ENCODE measurements at regions of chr4 and their contacts with region 1.

Region 1: DNA sequence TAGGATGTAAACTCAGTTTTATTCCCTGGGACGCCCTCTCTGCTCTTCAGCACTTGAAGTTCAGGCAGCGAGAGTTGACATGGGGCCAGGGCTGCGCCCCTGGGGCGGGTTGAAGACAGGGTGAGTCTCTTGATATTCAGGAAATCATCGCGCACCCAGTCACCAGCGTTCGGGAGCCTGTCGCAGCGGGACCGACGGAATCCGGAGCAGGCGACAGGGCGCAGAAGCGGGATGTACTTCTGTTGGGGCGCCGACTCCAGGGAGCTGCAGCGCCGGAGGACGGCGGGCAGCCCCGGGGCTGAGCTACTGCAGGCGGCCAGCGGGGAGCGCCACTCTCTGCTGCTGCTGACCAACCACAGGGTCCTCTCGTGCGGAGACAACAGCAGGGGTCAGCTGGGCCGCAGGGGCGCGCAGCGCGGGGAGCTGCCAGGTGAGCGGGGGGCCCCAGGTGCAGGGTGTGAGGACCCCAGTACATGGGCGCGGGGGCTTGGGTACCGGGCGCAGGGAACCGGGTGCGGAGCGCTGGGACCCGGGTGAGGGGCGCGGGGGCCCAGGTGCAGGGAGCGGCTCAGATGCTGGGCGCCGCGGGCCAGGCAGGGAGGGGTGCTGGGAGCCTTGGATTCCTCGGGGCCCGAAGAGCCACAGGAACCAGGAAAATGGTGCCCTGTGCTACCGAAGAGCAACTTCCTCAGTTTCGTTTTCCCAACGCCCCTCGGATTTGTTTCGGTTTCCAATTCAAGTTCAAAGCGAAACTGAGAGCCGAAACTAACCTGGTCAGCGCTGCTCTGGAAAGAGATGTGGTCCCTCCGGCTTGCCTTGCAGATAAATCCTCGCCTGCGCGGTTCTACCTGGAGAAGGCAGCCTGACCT is at the start of gene HERC6:
- DNase-seq: peak; percentile 85
- total RNA-seq, gene HERC6: 10.0 TPM

Region 2: DNA sequence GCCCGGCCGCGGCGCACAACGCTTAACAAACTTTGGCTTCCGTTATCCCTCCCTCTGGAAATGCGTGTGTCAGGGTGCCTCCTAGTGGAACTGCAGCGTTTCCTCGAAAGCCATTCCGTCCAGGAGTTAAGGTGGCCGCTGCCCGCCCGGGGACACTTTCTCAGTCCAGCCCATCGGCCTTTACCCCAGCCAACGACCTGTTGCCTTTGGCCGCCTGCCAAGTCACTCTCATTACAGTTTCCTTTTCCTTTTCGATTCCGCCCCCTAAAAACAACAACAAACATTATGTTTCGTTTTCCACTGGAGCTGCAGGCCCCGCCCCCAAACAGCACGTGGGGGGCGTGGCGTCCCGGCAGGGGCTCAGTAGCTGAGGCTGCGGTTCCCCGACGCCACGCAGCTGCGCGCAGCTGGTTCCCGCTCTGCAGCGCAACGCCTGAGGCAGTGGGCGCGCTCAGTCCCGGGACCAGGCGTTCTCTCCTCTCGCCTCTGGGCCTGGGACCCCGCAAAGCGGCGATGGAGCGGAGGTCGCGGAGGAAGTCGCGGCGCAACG is 77.9 kb after region 1 on chr4 and contains the start of gene HERC5:
- intact Hi-C with region 1: loop called (anchors 2 kb)
- DNase-seq: peak; percentile 95
- total RNA-seq, gene HERC5: 1.9 TPM